CD4-positive, alpha-beta T cell (primary cell): ENCODE measurements at regions of chr17 and their contacts with region 1.

Region 1: GRCh38 chr17:15238057-15238456 is 27.1 kb downstream of the PMP22 start:
- DNase-seq: peak in 3 of 14 experiments; percentile 19 to 48 (median 31)
- ATAC-seq: no peak
- H3K4me3 ChIP-seq: no peak overlapping the region
- H3K4me3 Mint-ChIP-seq: no peak overlapping the region
- H3K27ac ChIP-seq: no peak overlapping the region
- H3K27ac Mint-ChIP-seq: no peak overlapping the region
- H3K4me1 ChIP-seq: peaks cover 6% of the 10 kb centered on the region
- H3K4me1 Mint-ChIP-seq: no peaks in the 10 kb centered on the region
- H3K27me3 ChIP-seq: peaks cover 4 to 11% of the 10 kb centered on the region in 2 experiments
- H3K27me3 Mint-ChIP-seq: peaks cover 46% of the 10 kb centered on the region
- CTCF ChIP-seq: no peak

Region 2: GRCh38 chr17:15185625-15185991 is 52.4 kb before region 1 on chr17:
- CTCF ChIA-PET with region 1: no interaction called
- POLR2A ChIA-PET with region 1: no interaction called
- intact Hi-C with region 1: no loop called
- DNase-seq: peak in 1 of 14 experiments; percentile 1
- ATAC-seq: no peak
- H3K4me3 ChIP-seq: no peak overlapping the region
- H3K4me3 Mint-ChIP-seq: no peak overlapping the region
- H3K27ac ChIP-seq: no peak overlapping the region
- H3K27ac Mint-ChIP-seq: no peak overlapping the region
- H3K4me1 ChIP-seq: no peaks in the 10 kb centered on the region
- H3K4me1 Mint-ChIP-seq: no peaks in the 10 kb centered on the region
- H3K27me3 ChIP-seq: peaks cover 0 to 6% of the 10 kb centered on the region in 2 experiments
- H3K27me3 Mint-ChIP-seq: peaks cover 16% of the 10 kb centered on the region
- CTCF ChIP-seq: no peak

Region 3: GRCh38 chr17:15257258-15257788 is 19.3 kb after region 1 on chr17:
- CTCF ChIA-PET with region 1: no interaction called
- POLR2A ChIA-PET with region 1: no interaction called
- intact Hi-C with region 1: no loop called
- DNase-seq: peak; percentile 20 to 75 (median 34)
- ATAC-seq: no peak
- H3K4me3 ChIP-seq: no peak overlapping the region
- H3K4me3 Mint-ChIP-seq: no peak overlapping the region
- H3K27ac ChIP-seq: no peak overlapping the region
- H3K27ac Mint-ChIP-seq: no peak overlapping the region
- H3K4me1 ChIP-seq: peaks cover 21% of the 10 kb centered on the region
- H3K4me1 Mint-ChIP-seq: peaks cover 16% of the 10 kb centered on the region
- H3K27me3 ChIP-seq: peaks cover 28 to 44% of the 10 kb centered on the region in 2 experiments
- H3K27me3 Mint-ChIP-seq: peaks cover 76% of the 10 kb centered on the region
- CTCF ChIP-seq: peak; percentile 84

Region 4: DNA sequence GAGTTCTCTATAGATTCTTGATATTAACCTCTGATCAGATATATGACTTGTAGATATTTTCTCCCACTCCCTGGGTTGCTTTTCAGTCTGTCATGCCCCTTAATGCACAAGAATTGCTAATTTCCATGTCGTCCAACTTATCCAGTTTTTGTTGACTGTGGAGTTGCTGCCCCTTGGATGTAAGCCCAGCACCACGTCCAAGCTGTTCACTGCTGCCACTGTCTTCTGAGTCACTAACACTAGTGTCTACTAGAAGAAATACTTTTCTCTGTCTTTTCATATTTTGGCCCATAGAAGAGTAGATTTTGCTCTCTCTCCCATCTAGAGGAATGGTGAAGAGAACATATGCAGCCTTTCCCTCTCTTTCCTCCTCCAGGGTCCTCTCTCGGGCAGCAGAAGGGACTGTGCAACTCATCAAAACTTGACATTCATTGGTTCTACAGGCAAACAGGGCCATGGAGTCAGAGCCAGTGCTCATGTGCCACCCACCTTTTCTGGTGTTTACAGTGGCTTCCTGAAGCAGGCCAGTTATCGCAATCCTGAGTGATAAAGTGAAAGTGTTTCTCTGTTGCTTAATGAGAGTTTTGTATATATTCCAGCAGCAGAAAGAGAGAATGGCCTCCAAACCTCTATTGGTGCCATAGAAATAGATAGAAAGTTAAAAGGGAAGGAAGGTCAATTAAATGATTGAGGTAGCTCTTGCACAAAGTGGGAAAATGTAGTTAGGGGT is 49.6 kb after region 1 on chr17:
- CTCF ChIA-PET with region 1: no interaction called
- POLR2A ChIA-PET with region 1: no interaction called
- intact Hi-C with region 1: loop called in 1 of 2 experiments (anchors 1 kb)
- DNase-seq: no peak
- ATAC-seq: no peak
- H3K4me3 ChIP-seq: no peak overlapping the region
- H3K4me3 Mint-ChIP-seq: no peak overlapping the region
- H3K27ac ChIP-seq: no peak overlapping the region
- H3K27ac Mint-ChIP-seq: no peak overlapping the region
- H3K4me1 ChIP-seq: no peaks in the 10 kb centered on the region
- H3K4me1 Mint-ChIP-seq: no peaks in the 10 kb centered on the region
- H3K27me3 ChIP-seq: peaks cover 2 to 14% of the 10 kb centered on the region in 2 experiments
- H3K27me3 Mint-ChIP-seq: peaks cover 49% of the 10 kb centered on the region
- CTCF ChIP-seq: no peak